CD4-positive, alpha-beta memory T cell (primary cell): ENCODE measurements at regions of chr9 and their contacts with region 1.

Region 1: DNA sequence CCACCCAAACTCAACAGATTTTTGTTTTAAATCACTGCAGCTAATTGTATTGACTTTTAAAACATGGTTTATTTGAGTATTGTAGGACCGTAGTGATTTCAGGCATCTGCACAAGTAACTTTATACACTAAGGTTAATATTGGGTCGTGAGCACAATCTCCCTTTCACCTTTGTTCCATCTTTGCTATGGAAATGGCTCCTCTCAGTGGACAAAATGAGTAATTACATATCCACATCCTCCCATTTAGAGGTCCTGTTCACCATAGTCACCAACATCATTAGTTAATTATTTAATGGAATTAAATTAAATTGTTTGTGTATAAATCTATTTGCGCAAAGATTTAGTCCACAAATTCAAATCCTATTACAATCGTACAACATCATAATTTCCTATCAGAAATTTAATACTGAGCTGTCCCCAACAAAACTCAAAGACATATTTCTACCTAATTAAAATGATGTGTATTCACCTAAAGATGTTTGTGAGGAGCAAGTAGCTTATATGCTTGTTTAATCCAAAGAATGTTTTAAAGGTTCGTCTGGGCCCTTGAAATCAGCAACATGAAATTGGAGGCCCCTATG is 173.0 kb upstream of the DAPK1 start:
- DNase-seq: peak in 4 of 5 donors; percentile 23 to 43 (median 30)
- H3K4me3 ChIP-seq: no peak overlapping the region
- H3K4me3 Mint-ChIP-seq: no peak overlapping the region
- H3K27ac ChIP-seq: no peak overlapping the region
- H3K27ac Mint-ChIP-seq: no peak overlapping the region
- H3K4me1 ChIP-seq: no peaks in the 10 kb centered on the region
- H3K4me1 Mint-ChIP-seq: peaks cover 0 to 1% (median 0%) of the 10 kb centered on the region in 4 donors
- H3K27me3 ChIP-seq: no peaks in the 10 kb centered on the region
- H3K27me3 Mint-ChIP-seq: peaks cover 2 to 10% of the 10 kb centered on the region in 2 donors

Region 2: DNA sequence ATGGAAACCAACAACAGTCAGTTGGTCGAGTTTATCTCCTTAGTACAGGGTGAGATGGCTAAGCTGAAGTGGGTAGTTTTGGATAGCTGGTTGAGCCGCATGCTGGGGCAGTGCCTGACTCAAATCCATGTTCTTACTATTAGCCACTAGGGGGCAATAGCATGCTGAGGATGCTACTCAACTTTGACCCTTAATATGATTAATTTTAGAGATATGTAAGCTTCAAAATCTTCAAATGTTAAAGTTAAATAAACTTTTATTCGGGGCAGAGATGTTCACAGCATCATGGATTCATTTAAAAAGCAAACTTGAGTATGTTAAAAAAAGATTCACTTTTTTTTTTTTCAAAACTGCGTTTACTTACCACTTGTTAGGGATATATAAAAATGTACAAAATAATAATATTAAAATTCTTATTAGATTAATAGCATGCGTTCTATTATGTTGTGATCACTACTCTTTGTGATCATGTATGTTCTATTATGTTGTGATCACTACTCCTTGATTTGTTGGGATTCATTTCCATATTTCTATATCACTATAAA is 1122.3 kb before region 1 on chr9:
- CTCF ChIA-PET with region 1: interaction called, 16 read pairs
- POLR2A ChIA-PET with region 1: no interaction called
- intact Hi-C with region 1: no loop called
- DNase-seq: peak in 4 of 5 donors; percentile 14 to 33 (median 24)
- H3K4me3 ChIP-seq: no peak overlapping the region
- H3K4me3 Mint-ChIP-seq: no peak overlapping the region
- H3K27ac ChIP-seq: no peak overlapping the region
- H3K27ac Mint-ChIP-seq: peak overlapping the region in 1 of 7 donors; percentile 17
- H3K4me1 ChIP-seq: no peaks in the 10 kb centered on the region
- H3K4me1 Mint-ChIP-seq: peaks cover 0 to 5% (median under 1%) of the 10 kb centered on the region in 4 donors
- H3K27me3 ChIP-seq: no peaks in the 10 kb centered on the region
- H3K27me3 Mint-ChIP-seq: peaks cover 0 to 4% of the 10 kb centered on the region in 2 donors

Region 3: GRCh38 chr9:86434039-86434726 is 890.5 kb before region 1 on chr9:
- CTCF ChIA-PET with region 1: interaction called, 21 read pairs
- POLR2A ChIA-PET with region 1: no interaction called
- intact Hi-C with region 1: loop called (anchors 1 kb)
- DNase-seq: peak in 4 of 5 donors; percentile 15 to 35 (median 28)
- H3K4me3 ChIP-seq: no peak overlapping the region
- H3K4me3 Mint-ChIP-seq: no peak overlapping the region
- H3K27ac ChIP-seq: no peak overlapping the region
- H3K27ac Mint-ChIP-seq: no peak overlapping the region
- H3K4me1 ChIP-seq: no peaks in the 10 kb centered on the region
- H3K4me1 Mint-ChIP-seq: peaks cover 0 to 2% (median 0%) of the 10 kb centered on the region in 4 donors
- H3K27me3 ChIP-seq: no peaks in the 10 kb centered on the region
- H3K27me3 Mint-ChIP-seq: peaks cover 7 to 23% of the 10 kb centered on the region in 2 donors

Region 4: GRCh38 chr9:86486891-86487837 is 837.5 kb before region 1 on chr9:
- CTCF ChIA-PET with region 1: interaction called, 16 read pairs
- POLR2A ChIA-PET with region 1: no interaction called
- intact Hi-C with region 1: no loop called
- DNase-seq: peak in 1 of 5 donors; percentile 4
- H3K4me3 ChIP-seq: no peak overlapping the region
- H3K4me3 Mint-ChIP-seq: no peak overlapping the region
- H3K27ac ChIP-seq: no peak overlapping the region
- H3K27ac Mint-ChIP-seq: no peak overlapping the region
- H3K4me1 ChIP-seq: no peaks in the 10 kb centered on the region
- H3K4me1 Mint-ChIP-seq: peaks cover 0 to 5% (median 2%) of the 10 kb centered on the region in 4 donors
- H3K27me3 ChIP-seq: no peaks in the 10 kb centered on the region
- H3K27me3 Mint-ChIP-seq: peaks cover 2 to 3% of the 10 kb centered on the region in 2 donors

Region 5: GRCh38 chr9:87249029-87249428 is 75.7 kb before region 1 on chr9:
- CTCF ChIA-PET with region 1: no interaction called
- POLR2A ChIA-PET with region 1: no interaction called
- intact Hi-C with region 1: no loop called
- DNase-seq: no peak
- H3K4me3 ChIP-seq: no peak overlapping the region
- H3K4me3 Mint-ChIP-seq: no peak overlapping the region
- H3K27ac ChIP-seq: no peak overlapping the region
- H3K27ac Mint-ChIP-seq: no peak overlapping the region
- H3K4me1 ChIP-seq: no peaks in the 10 kb centered on the region
- H3K4me1 Mint-ChIP-seq: no peaks in the 10 kb centered on the region
- H3K27me3 ChIP-seq: no peaks in the 10 kb centered on the region
- H3K27me3 Mint-ChIP-seq: no peaks in the 10 kb centered on the region

Region 6: DNA sequence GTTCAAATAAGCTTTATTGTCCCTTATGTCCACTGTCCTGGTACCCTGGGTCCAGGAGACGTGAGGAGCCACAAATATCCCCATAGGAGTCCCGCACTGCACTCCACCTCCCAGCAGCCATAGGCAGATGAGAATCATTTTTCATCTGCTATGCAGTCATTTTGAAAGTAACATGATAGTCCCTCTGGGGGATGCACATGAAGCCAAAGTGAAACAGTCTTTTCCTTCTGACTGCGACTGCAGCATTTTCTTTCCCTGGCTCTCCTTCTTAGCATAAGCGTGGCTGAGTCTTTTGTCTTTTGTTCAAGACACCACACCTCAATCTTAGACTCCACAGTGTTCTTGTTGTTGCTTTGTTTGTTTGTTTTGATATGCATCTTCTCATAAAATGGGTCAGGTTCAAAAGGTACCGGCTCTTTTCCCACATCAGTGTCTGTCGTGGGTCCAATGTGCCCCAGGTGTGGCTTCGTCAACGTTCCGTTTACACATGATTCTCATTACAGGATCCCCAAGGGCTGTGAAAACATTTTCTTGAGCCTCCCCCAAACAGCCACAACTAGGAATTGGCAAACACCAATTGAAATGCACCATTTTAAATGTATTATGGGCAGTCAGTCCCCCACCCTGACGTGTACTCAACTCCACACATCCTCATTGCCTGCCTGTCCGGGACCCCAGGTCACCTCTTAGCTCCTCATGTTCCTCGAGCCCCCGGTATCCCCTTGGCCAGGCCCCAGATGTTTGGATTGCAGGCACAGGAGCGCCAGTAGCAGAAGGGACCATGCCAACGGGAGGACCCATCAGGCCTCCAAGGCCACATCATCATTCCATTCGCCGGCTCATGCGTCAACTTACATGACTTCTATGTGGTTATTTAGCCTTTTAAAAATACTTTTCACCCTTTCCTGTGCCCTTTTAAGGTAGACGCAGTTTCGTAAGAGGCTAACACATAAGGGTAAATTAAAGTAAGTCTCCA is 64.9 kb before region 1 on chr9:
- CTCF ChIA-PET with region 1: no interaction called
- POLR2A ChIA-PET with region 1: no interaction called
- intact Hi-C with region 1: no loop called
- DNase-seq: no peak
- H3K4me3 ChIP-seq: no peak overlapping the region
- H3K4me3 Mint-ChIP-seq: no peak overlapping the region
- H3K27ac ChIP-seq: no peak overlapping the region
- H3K27ac Mint-ChIP-seq: no peak overlapping the region
- H3K4me1 ChIP-seq: no peaks in the 10 kb centered on the region
- H3K4me1 Mint-ChIP-seq: no peaks in the 10 kb centered on the region
- H3K27me3 ChIP-seq: no peaks in the 10 kb centered on the region
- H3K27me3 Mint-ChIP-seq: peaks cover 0 to 2% of the 10 kb centered on the region in 2 donors